Activated CD4-positive, alpha-beta T cell treated with anti-CD3 and anti-CD28 coated beads for 36 hours (primary cell): ENCODE measurements at regions of chr22 and their contacts with region 1.

Region 1: DNA sequence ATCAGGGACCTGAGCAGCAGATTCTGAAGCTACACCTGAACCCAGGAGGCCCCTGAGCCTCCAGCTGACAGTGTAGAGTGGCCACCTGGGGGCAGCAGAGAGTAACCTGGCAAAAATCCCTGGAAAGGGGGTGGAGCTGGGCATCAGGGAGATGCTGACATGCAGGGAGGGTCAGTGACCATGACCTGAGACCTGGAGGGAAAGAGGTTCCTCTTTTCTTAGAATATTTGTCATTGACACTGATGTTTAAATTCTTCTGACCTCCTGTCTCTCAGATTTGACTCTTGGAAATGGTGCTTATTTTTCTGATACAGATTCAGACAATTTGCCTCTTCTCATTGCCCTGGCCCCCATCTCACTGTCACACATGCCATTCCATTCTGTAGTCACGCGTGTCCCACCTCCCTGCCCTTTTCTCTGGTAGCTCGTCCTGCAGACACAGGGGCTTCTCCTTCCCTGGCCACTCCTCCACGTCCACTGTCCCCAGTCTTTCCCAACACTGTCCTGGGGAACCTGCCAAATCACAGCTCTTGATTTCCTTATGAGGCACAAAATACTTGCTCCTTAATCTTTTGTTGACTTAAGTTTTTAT is 117.2 kb upstream of the IGLL5 start:
- DNase-seq: peak; percentile 74
- ATAC-seq: peak; percentile 71
- H3K4me3 Mint-ChIP-seq: no peak overlapping the region
- H3K27ac Mint-ChIP-seq: no peak overlapping the region
- H3K4me1 Mint-ChIP-seq: peaks cover 2% of the 10 kb centered on the region
- H3K27me3 Mint-ChIP-seq: peaks cover 6% of the 10 kb centered on the region

Region 2: DNA sequence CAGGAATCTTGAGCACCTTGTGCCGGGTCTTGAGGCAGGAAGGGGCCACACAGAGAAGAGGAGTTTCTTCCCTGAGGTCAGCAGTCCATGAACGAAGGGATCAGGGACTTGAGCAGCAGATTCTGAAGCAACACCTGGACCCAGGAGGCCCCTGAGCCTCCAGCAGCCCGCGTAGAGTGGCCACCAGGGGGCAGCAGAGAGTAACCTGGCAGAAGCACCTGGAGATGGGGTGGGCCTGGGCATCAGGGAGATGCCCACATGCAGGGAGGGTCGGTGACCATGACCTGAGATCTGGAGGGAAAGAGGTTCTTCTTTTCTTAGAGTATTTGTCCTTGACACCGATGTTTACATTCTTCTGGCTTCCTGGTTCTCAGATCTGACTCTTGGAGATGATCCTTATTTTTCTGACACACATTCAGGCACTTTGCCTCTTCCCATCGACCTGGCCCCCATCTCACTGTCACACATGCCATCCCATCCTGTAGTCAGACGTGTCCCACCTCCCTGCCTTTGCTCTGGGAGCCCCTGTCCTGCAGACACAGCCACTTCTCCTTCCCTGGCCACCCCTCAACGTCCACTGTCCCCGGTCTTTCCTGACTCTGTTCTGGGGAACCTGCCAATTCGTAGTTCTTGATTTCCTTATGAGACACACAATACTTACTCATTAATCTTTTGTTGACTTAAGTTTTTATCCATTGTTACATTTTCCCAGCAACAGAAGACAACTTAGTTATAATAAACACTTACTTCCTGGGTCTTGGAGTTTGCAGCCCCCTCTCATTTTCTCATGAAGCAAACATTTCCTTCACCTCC is 59.5 kb before region 1 on chr22:
- CTCF ChIA-PET with region 1: interaction called, 4 read pairs
- POLR2A ChIA-PET with region 1: no interaction called
- intact Hi-C with region 1: loop called in 1 of 2 experiments (anchors 1 kb)
- DNase-seq: peak; percentile 86
- ATAC-seq: peak; percentile 58
- H3K4me3 Mint-ChIP-seq: no peak overlapping the region
- H3K27ac Mint-ChIP-seq: no peak overlapping the region
- H3K4me1 Mint-ChIP-seq: no peaks in the 10 kb centered on the region
- H3K27me3 Mint-ChIP-seq: no peaks in the 10 kb centered on the region

Region 3: GRCh38 chr22:22748297-22748743 is 22.1 kb before region 1 on chr22:
- CTCF ChIA-PET with region 1: interaction called, 31 read pairs
- POLR2A ChIA-PET with region 1: no interaction called
- intact Hi-C with region 1: no loop called
- DNase-seq: peak; percentile 60
- ATAC-seq: peak; percentile 79
- H3K4me3 Mint-ChIP-seq: no peak overlapping the region
- H3K27ac Mint-ChIP-seq: no peak overlapping the region
- H3K4me1 Mint-ChIP-seq: peaks cover 6% of the 10 kb centered on the region
- H3K27me3 Mint-ChIP-seq: no peaks in the 10 kb centered on the region

Region 4: GRCh38 chr22:22753526-22754267 is 16.7 kb before region 1 on chr22:
- CTCF ChIA-PET with region 1: interaction called, 31 read pairs
- POLR2A ChIA-PET with region 1: no interaction called
- intact Hi-C with region 1: no loop called
- DNase-seq: peak; percentile 89
- ATAC-seq: peak; percentile 99
- H3K4me3 Mint-ChIP-seq: no peak overlapping the region
- H3K27ac Mint-ChIP-seq: peak overlapping the region; percentile 58
- H3K4me1 Mint-ChIP-seq: peaks cover 34% of the 10 kb centered on the region
- H3K27me3 Mint-ChIP-seq: no peaks in the 10 kb centered on the region